Sciatic nerve (tissue), 2 donors: ENCODE measurements at regions of chr11 and their contacts with region 1.

Region 1: DNA sequence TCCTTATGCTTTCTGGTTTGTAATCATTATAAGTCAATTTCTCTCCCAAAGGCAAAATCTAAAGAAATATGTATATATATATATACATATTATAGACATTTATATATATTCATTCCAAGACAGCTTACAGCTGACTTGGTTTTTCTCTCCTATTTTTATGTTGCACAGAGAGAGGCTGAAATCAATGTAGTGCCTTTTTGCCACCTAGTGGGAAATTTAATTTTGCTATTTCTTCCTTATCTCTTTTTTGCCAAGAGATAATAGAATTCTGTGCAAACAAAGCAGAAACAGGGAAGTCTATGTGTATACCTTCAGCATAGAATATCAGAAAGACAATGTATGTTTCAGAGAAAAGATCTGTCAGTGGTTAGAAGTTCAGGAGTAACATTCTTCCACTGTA is 186.0 kb upstream of the ANO5 start:
- DNase-seq: no peak
- ATAC-seq: no peak

Region 2: DNA sequence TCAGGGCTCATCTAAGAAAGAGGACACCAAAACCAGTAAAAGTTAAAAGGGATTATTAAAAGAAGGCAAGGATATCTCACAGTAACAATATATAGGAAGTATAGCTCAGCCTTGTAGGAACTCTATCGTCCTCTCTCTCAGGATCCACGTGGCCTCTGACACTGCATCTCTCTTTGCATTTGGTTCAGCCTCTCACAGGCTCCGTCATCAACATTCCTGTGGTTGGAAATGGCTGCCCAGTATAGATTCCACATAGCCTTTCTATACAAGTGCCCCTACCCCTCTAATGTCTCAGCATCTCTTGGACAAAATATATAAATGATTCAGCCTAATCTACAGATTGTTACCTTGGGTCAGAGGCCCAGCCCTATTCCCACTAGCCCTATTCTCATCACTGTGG is 1745.4 kb before region 1 on chr11:
- intact Hi-C with region 1: no loop called
- DNase-seq: no peak
- ATAC-seq: no peak

Region 3: GRCh38 chr11:21736404-21736803 is 270.5 kb before region 1 on chr11:
- intact Hi-C with region 1: no loop called
- DNase-seq: no peak
- ATAC-seq: no peak

Region 4: DNA sequence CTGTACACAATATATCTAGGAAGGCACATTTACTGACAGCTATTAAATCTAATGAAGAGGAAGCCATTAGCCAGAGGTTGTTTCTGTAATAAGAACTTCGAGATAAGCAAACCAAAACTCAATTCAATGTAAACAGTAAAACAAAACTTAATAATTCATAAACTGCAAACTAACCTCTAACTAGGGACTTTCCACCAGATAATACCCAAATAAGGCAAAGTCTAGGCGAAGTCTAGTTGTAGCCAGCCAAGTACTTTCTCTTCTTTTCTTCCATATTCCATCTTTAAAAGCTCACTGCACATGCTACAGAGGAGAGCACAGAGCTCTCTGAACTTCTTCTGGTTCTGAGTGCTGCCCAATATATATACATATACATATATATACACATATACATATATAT is 43.9 kb before region 1 on chr11:
- intact Hi-C with region 1: loop called (anchors 1 kb)
- DNase-seq: no peak
- ATAC-seq: no peak